Endothelial cell of umbilical vein (primary cell): ENCODE measurements at regions of chrX and their contacts with region 1.

Region 1: GRCh38 chrX:23901805-23902204 is 5.9 kb downstream of the APOO start:
- DNase-seq: peak; percentile 81
- H3K4me3 ChIP-seq: no peak overlapping the region
- H3K27ac ChIP-seq: peak overlapping the region; percentile 90
- H3K4me1 ChIP-seq: peaks cover 48% of the 10 kb centered on the region
- H3K27me3 ChIP-seq: no peaks in the 10 kb centered on the region
- CTCF ChIP-seq: peak; percentile 32 to 51
- POLR2A ChIP-seq: no peak

Region 2: GRCh38 chrX:23694606-23695005 is 207.2 kb before region 1 on chrX:
- CTCF ChIA-PET with region 1: interaction called, 85 read pairs
- POLR2A ChIA-PET with region 1: no interaction called
- dilution Hi-C with region 1: no loop called
- intact Hi-C with region 1: loop called (anchors 1 kb)
- DNase-seq: peak; percentile 42
- H3K4me3 ChIP-seq: no peak overlapping the region
- H3K27ac ChIP-seq: no peak overlapping the region
- H3K4me1 ChIP-seq: no peaks in the 10 kb centered on the region
- H3K27me3 ChIP-seq: no peaks in the 10 kb centered on the region
- CTCF ChIP-seq: peak; percentile 5 to 33
- POLR2A ChIP-seq: no peak

Region 3: GRCh38 chrX:23704673-23705206 is 197.1 kb before region 1 on chrX:
- CTCF ChIA-PET with region 1: interaction called, 29 read pairs
- POLR2A ChIA-PET with region 1: no interaction called
- dilution Hi-C with region 1: no loop called
- intact Hi-C with region 1: no loop called
- DNase-seq: no peak
- H3K4me3 ChIP-seq: no peak overlapping the region
- H3K27ac ChIP-seq: no peak overlapping the region
- H3K4me1 ChIP-seq: no peaks in the 10 kb centered on the region
- H3K27me3 ChIP-seq: no peaks in the 10 kb centered on the region
- CTCF ChIP-seq: no peak
- POLR2A ChIP-seq: no peak

Region 4: DNA sequence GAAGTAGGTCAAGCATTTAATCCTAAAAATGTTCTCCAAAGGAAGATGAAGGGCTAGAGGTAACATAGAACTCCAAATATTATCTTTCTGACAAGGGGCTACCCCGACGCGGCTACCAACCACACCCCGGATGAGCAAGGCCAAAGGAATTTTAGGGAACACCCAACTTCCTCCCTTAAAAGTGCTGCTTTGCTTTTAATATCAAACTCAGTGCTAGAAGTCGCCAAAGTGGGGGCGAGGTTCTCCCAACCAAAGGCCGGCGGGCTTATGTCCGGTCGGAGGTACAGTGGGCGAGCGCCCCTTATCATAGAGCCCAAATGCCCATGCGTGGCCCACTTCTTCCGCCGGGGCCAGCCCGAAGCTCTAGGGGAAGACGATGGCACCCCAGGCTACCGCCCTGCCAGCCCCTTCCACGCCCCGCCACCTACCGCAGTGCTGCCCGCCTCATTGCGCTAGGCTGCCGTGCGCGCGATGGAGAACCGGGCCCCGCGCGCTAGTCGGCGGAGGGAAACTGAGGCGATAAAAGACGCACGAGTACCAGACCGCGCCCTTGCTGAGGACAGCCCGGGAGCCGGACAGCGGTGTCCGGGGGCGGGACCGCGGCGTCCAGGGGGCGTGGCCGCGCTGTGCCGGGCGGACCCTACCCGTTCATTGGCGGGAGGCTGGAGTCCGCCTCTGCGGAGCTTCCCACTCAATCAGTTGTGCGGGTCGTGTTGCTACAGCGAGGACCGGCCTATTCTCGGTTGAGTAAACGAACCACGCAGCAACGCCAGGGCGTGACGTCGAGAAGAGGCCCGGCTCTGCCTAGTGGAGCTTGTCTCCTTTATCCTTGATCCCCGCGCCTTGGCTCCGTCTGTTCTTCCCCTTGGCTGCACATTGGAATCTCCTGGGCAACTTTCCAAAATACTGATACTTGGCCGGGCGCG is 158.8 kb before region 1 on chrX and contains the start of gene ACOT9:
- CTCF ChIA-PET with region 1: interaction called, 29 read pairs
- POLR2A ChIA-PET with region 1: interaction called, 5 read pairs
- dilution Hi-C with region 1: no loop called
- intact Hi-C with region 1: loop called (anchors 1 kb)
- DNase-seq: peak; percentile 94
- H3K4me3 ChIP-seq: peak within 1 kb of the TSS; percentile 46 to 94 (median 90)
- H3K27ac ChIP-seq: peak within 1 kb of the TSS; percentile 94
- H3K4me1 ChIP-seq: peaks cover 13% of the 10 kb centered on the region
- H3K27me3 ChIP-seq: no peaks in the 10 kb centered on the region
- CTCF ChIP-seq: no peak
- POLR2A ChIP-seq: peak; percentile 79
- total RNA-seq, gene ACOT9: 83.1 and 88.5 TPM in 2 replicates

Region 5: DNA sequence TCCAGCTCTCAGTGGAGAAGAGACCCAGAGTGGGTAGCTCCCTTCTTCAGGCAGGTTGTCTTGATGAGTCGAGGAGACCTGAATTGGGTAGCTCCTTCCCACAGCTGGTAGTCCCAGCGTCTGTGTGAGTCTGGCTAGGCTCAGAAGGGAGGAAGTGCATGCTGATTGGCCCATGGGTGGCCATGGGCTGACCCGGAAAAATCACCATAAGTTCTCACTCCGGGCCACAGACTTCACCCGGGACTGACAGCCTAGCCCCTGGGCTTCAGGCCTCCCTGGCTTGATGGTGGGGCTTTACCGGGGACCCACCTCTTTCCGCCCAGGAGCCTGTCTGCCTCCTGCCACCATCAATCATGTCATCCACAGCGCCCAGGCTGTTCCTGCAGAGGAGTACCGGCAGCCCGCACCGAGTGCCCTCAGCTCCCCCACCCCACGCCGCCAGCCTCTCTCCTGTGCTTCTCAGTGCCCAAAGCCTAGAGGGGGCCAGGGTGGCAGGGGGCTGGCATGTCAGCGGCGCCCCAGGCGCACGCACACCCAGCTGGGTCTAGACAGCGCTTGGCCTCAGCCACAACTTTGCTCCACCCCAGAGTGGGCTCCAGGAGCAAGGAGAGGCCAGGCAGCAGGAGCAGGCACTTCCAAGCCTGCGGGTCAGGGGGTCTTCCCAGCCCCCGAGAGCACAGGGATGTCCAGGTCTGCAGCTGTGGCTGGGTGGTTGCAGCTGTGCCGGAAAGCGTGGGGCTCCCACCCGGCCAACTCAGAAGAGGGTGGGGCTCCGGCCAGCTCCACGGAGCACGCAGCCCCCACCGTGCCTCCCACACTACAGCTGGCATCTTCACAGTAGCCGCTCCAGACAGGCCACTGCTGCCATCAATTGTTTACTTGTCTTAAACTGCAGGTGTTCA is 134.9 kb before region 1 on chrX:
- CTCF ChIA-PET with region 1: interaction called, 12 read pairs
- POLR2A ChIA-PET with region 1: no interaction called
- dilution Hi-C with region 1: no loop called
- intact Hi-C with region 1: no loop called
- DNase-seq: no peak
- H3K4me3 ChIP-seq: no peak overlapping the region
- H3K27ac ChIP-seq: no peak overlapping the region
- H3K4me1 ChIP-seq: no peaks in the 10 kb centered on the region
- H3K27me3 ChIP-seq: no peaks in the 10 kb centered on the region
- CTCF ChIP-seq: no peak
- POLR2A ChIP-seq: no peak

Region 6: DNA sequence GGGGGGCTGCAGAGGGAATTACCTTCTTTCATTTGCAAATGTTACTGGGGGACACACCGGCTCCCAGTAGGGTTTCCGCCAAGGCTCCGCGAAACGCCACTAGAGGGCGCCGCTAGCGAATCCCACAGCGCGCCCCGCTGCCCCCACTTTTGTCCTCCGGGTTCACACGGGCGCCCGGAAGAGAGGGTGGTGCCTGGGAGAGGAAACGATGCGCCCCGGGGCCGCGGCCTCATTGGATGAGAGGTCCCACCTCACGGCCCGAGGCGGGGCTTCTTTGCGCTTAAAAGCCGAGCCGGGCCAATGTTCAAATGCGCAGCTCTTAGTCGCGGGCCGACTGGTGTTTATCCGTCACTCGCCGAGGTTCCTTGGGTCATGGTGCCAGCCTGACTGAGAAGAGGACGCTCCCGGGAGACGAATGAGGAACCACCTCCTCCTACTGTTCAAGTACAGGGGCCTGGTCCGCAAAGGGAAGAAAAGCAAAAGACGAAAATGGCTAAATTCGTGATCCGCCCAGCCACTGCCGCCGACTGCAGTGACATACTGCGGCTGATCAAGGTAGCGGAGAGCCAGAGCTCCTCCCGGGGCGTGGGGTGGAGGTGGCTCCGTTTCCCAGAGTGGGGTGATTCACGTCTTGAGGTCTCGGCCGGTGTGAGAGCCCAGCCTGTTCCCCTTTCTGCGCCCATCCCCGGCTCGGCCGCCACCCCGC is 118.8 kb before region 1 on chrX and contains the start of gene SAT1:
- CTCF ChIA-PET with region 1: interaction called, 132 read pairs
- POLR2A ChIA-PET with region 1: interaction called, 92 read pairs
- dilution Hi-C with region 1: no loop called
- intact Hi-C with region 1: loop called (anchors 1 kb)
- DNase-seq: peak; percentile 92
- H3K4me3 ChIP-seq: peak within 1 kb of the TSS; percentile 56 to 90 (median 67)
- H3K27ac ChIP-seq: peak within 1 kb of the TSS; percentile 84
- H3K4me1 ChIP-seq: peaks cover 23% of the 10 kb centered on the region
- H3K27me3 ChIP-seq: no peaks in the 10 kb centered on the region
- CTCF ChIP-seq: peak; percentile 73 to 77
- POLR2A ChIP-seq: peak; percentile 99
- total RNA-seq, gene SAT1: 256 and 289 TPM in 2 replicates

Region 7: DNA sequence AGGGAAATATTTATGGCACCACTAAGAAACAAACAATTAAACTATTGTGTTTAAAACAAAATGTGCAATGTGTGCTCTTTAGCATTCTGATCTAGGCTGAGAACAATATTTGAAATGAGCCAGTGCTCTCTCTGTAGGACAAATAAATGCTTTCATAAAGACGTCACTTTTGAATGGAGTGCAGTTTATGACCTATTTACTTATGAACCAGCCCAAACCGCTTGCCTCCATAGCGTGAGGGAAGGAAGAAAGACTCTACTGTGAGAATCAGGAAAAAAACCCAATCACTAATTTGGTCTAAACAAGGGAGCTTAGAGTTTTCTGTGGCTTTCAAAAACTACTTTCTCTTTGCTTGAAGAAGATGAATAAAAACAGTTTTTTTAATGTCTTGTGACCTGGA is 79.4 kb before region 1 on chrX:
- CTCF ChIA-PET with region 1: interaction called, 10 read pairs
- POLR2A ChIA-PET with region 1: no interaction called
- dilution Hi-C with region 1: no loop called
- intact Hi-C with region 1: no loop called
- DNase-seq: no peak
- H3K4me3 ChIP-seq: no peak overlapping the region
- H3K27ac ChIP-seq: no peak overlapping the region
- H3K4me1 ChIP-seq: no peaks in the 10 kb centered on the region
- H3K27me3 ChIP-seq: no peaks in the 10 kb centered on the region
- CTCF ChIP-seq: no peak
- POLR2A ChIP-seq: no peak

Region 8: GRCh38 chrX:23871905-23872546 is 29.8 kb before region 1 on chrX:
- CTCF ChIA-PET with region 1: no interaction called
- POLR2A ChIA-PET with region 1: no interaction called
- dilution Hi-C with region 1: no loop called
- intact Hi-C with region 1: no loop called
- DNase-seq: no peak
- H3K4me3 ChIP-seq: no peak overlapping the region
- H3K27ac ChIP-seq: no peak overlapping the region
- H3K4me1 ChIP-seq: peaks cover 3% of the 10 kb centered on the region
- H3K27me3 ChIP-seq: no peaks in the 10 kb centered on the region
- CTCF ChIP-seq: no peak
- POLR2A ChIP-seq: no peak